ENCODE measurements at regions of chr18 and their contacts with region 1.

Region 1: GRCh38 chr18:47658498-47658897 is 272.0 kb downstream of the SMAD2 start:
- DNase-seq: no peak
- H3K4me3 ChIP-seq: no peak overlapping the region
- H3K27ac ChIP-seq: no peak overlapping the region
- H3K4me1 ChIP-seq: no peaks in the 10 kb centered on the region
- H3K27me3 ChIP-seq: no peaks in the 10 kb centered on the region
- CTCF ChIP-seq: peak in 2 of 3 experiments; percentile 30 to 39; a peak in 2 of 4 replicates
- EP300 ChIP-seq: no peak
- POLR2A ChIP-seq: no peak
- RAD21 ChIP-seq: no peak; a peak in 1 of 4 replicates

Region 2: GRCh38 chr18:47689371-47689770 is 30.9 kb after region 1 on chr18:
- CTCF ChIA-PET with region 1: interaction called, 10 read pairs
- POLR2A ChIA-PET with region 1: no interaction called
- DNase-seq: peak in 1 of 2 experiments; percentile 13
- H3K4me3 ChIP-seq: no peak overlapping the region
- H3K27ac ChIP-seq: no peak overlapping the region
- H3K4me1 ChIP-seq: peaks cover 0 to 11% (median 1%) of the 10 kb centered on the region in 4 experiments; a peak in 3 of 7 replicates
- H3K27me3 ChIP-seq: no peaks in the 10 kb centered on the region
- CTCF ChIP-seq: no peak
- EP300 ChIP-seq: no peak
- POLR2A ChIP-seq: no peak
- RAD21 ChIP-seq: no peak